CD14-positive monocyte (primary cell): ENCODE measurements at regions of chr19 and their contacts with region 1.

Region 1: DNA sequence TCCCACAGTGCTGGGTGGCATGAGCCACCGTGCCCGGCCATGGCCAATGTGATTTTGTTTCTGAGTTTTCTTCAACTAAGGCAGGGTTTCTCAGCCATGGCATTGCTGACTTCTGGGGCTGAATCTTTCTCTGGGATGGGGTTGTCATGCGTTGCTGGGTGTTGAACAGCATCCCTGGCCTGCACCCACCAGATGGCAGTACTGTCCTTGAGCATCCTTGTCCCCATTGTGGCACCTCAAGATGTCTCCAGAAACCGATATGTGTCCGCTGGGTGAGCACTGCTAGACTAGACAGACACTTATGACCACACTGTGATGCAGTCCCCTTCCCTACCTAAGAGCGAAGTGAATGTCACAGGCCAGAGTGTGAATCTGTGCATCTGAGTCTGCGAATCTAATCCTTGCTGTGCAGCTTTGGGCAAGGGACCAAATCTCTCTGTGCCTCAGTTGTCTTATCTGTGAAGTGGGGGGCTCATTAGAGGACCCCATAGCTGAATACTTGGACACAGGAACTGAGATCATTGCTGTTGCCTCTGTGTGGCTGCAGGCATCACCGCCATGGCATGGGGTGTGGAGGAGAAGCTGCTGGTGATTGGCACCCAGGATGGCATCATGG is 50.3 kb upstream of the SIN3B start:
- DNase-seq: peak; percentile 74 to 79 (median 79)
- H3K4me3 ChIP-seq: no peak overlapping the region
- H3K4me3 Mint-ChIP-seq: no peak overlapping the region
- H3K27ac ChIP-seq: peak overlapping the region in 1 of 2 donors; percentile 32
- H3K27ac Mint-ChIP-seq: peak overlapping the region in 4 of 7 donors; percentile 6 to 76 (median 43)
- H3K4me1 ChIP-seq: peaks cover 28 to 36% of the 10 kb centered on the region in 2 donors
- H3K4me1 Mint-ChIP-seq: peaks cover 32% of the 10 kb centered on the region
- H3K27me3 ChIP-seq: no peaks in the 10 kb centered on the region
- H3K27me3 Mint-ChIP-seq: peaks cover 6 to 11% (median 10%) of the 10 kb centered on the region in 3 donors
- CTCF ChIP-seq: peak; percentile 78

Region 2: DNA sequence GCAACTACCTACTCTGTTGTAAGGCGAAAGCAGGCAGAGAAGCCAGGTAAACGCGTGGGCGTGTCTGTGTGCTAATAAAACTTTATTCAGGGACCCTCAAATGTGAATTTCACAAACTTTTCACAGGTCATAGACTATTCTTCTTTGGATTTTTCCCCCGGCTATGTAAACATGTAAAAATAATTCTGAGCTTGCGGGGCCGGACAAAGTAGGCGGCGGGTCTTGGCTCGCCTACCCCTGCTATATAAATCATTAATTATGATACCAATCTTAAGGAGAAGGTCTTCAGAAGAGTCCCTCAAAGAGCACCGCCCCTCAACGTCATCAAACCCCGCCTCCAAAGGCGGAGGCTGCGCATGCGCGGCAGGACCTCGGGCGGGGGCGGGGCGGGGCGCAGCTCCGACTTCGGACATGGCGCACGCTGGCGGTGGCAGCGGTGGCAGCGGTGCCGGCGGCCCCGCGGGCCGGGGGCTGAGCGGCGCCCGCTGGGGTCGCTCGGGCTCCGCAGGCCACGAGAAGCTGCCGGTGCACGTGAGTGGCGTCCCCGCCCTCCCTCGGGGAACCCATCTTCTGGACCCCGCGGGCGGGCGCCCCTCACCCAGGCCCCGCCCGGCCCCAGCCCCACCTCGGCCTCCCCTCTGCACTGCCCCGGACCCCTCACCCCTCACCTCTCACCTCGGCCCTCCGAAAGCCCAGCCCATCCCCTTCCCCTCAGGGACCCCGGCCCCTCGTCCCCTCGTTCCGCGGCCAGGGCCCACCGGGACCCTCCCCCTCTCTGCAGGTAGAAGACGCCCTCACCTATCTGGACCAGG is 50.3 kb after region 1 on chr19 and contains the start of gene SIN3B:
- intact Hi-C with region 1: loop called (anchors 5 kb)
- DNase-seq: peak; percentile 87 to 91 (median 89)
- H3K4me3 ChIP-seq: peak within 1 kb of the TSS; percentile 52 to 97 (median 91)
- H3K4me3 Mint-ChIP-seq: peak within 1 kb of the TSS; percentile 87 to 91
- H3K27ac ChIP-seq: peak within 1 kb of the TSS in 1 of 2 donors; percentile 85
- H3K27ac Mint-ChIP-seq: peak within 1 kb of the TSS; percentile 78 to 93 (median 88)
- H3K4me1 ChIP-seq: peaks cover 59 to 63% of the 10 kb centered on the region in 2 donors
- H3K4me1 Mint-ChIP-seq: peaks cover 66% of the 10 kb centered on the region
- H3K27me3 ChIP-seq: peaks cover 0 to 3% of the 10 kb centered on the region in 2 donors
- H3K27me3 Mint-ChIP-seq: peaks cover 9 to 16% (median 14%) of the 10 kb centered on the region in 3 donors
- CTCF ChIP-seq: no peak
- polyA plus RNA-seq, gene SIN3B: 7.2 to 154 (median 10.2) TPM

Region 3: DNA sequence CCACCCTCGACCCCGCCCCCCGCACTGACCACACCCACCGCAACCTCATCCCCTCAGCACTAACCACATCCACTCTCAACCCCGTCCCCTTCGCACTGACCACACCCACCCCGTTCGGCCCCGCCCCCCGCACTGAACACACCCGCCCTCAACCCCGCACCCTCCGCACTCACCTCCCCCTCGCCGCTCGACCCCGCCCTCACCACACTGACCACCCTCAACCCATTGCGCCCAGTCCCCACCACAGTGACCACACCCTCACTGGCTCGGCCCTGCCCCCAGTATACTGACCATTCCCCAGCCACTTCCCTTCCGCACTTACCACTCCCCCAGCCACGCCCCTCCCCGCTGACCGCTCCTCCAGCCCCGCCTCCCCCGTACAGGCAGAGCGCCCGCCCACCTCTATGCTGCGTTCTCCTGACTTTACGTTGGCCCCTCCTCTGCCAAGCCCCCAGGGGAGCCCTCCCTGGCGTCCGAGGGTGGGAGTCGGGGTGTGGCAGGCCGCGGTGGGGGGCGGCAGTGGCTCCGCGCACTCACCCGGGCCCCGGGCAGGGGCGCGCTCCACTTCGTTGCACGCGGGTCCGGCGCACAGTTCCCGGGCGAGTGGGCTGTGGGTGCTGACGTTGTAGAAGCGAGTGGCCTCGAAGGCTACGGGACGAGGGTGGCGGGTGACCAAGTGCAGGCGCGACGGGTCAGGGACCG is 118.4 kb after region 1 on chr19:
- intact Hi-C with region 1: loop called (anchors 2 kb)
- DNase-seq: peak; percentile 91 to 97 (median 97)
- H3K4me3 ChIP-seq: peak overlapping the region; percentile 36 to 76 (median 56)
- H3K4me3 Mint-ChIP-seq: peak overlapping the region; percentile 66 to 71
- H3K27ac ChIP-seq: peak overlapping the region; percentile 46 to 79
- H3K27ac Mint-ChIP-seq: peak overlapping the region in 6 of 7 donors; percentile 68 to 97 (median 84)
- H3K4me1 ChIP-seq: peaks cover 64 to 68% of the 10 kb centered on the region in 2 donors
- H3K4me1 Mint-ChIP-seq: peaks cover 52% of the 10 kb centered on the region
- H3K27me3 ChIP-seq: peaks cover 0 to 32% of the 10 kb centered on the region in 2 donors
- H3K27me3 Mint-ChIP-seq: peaks cover 28 to 53% (median 46%) of the 10 kb centered on the region in 3 donors
- CTCF ChIP-seq: no peak

Region 4: GRCh38 chr19:16969127-16969526 is 190.2 kb after region 1 on chr19:
- intact Hi-C with region 1: loop called in 1 of 2 experiments (anchors 5 kb)
- DNase-seq: peak; percentile 56 to 73 (median 73)
- H3K4me3 ChIP-seq: no peak overlapping the region
- H3K4me3 Mint-ChIP-seq: no peak overlapping the region
- H3K27ac ChIP-seq: no peak overlapping the region
- H3K27ac Mint-ChIP-seq: peak overlapping the region in 3 of 7 donors; percentile 16 to 43 (median 19)
- H3K4me1 ChIP-seq: peaks cover 5 to 8% of the 10 kb centered on the region in 2 donors
- H3K4me1 Mint-ChIP-seq: peaks cover 12% of the 10 kb centered on the region
- H3K27me3 ChIP-seq: no peaks in the 10 kb centered on the region
- H3K27me3 Mint-ChIP-seq: peaks cover 7 to 14% (median 10%) of the 10 kb centered on the region in 3 donors
- CTCF ChIP-seq: peak; percentile 61

Region 5: DNA sequence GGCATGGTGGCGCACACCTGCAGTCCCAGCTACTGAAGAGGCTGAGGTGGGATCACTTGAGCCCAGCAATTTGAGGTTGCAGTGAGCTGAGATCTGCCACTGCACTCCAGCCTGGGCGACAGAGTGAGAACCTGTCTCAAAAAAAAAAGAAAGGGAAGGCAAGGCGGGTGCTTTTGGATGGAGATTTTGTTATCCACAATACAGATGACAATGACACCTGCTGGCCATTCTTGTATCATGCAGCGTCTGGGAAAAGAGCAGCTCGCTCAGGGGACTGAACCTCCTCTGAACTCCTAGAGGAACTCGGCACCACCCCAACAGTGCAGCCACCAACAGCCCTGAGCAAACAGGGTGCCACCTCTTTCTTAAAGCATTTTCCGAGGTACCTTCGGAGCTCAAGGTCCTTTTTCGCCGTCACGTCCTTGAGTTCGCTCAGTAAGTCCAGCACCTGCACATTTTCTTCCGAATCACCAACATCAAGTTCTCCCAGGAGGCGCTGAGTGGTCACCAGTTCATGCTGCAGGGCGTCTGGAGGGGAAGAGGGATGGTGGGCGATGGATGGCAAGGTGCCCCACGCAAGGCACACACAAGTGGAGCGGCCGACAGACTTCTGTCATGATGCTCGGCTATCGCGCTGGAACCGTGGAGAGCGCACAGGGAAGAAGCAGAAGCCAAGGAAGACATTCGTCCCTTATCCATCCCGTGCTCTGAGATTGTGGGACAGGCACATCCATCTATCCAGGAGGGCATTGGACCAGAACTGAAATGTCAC is 273.7 kb after region 1 on chr19:
- intact Hi-C with region 1: loop called in 1 of 2 experiments (anchors 5 kb)
- DNase-seq: peak; percentile 28 to 52 (median 47)
- H3K4me3 ChIP-seq: no peak overlapping the region
- H3K4me3 Mint-ChIP-seq: no peak overlapping the region
- H3K27ac ChIP-seq: no peak overlapping the region
- H3K27ac Mint-ChIP-seq: peak overlapping the region in 1 of 7 donors; percentile 7
- H3K4me1 ChIP-seq: no peaks in the 10 kb centered on the region
- H3K4me1 Mint-ChIP-seq: no peaks in the 10 kb centered on the region
- H3K27me3 ChIP-seq: no peaks in the 10 kb centered on the region
- H3K27me3 Mint-ChIP-seq: peaks cover 0 to 5% (median 0%) of the 10 kb centered on the region in 3 donors
- CTCF ChIP-seq: peak; percentile 69